MCF 10A (cell line): ENCODE measurements at regions of chr14 and their contacts with region 1.

Region 1: GRCh38 chr14:51395361-51395849 is 155.4 kb downstream of the TMX1 start:
- DNase-seq: peak; percentile 95
- H3K4me3 Mint-ChIP-seq: peak overlapping the region; percentile 48
- H3K27ac Mint-ChIP-seq: peak overlapping the region; percentile 97
- H3K4me1 Mint-ChIP-seq: peaks cover 44% of the 10 kb centered on the region
- H3K27me3 Mint-ChIP-seq: no peaks in the 10 kb centered on the region
- CTCF ChIP-seq: no peak

Region 2: DNA sequence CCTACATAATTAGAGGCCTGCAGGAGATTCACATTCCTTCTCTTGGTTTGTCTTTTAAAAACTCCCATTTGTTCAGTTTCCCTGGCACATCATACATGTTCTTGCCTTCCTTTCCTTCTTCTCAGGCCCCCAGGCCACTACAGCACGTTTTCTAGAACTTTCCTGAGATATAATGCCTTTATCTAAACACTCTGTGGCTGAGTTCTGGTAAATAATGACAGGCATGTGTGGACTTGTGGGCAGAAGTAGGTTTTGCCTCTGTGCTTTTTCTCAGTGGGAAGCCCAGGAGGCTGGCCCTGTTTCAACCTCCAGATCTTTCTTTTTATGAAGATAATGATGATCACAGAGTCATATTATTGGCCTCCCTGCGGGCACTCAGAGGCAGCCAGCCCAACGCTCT is 38.2 kb before region 1 on chr14:
- CTCF ChIA-PET with region 1: interaction called, 3 read pairs
- POLR2A ChIA-PET with region 1: interaction called, 10 read pairs
- intact Hi-C with region 1: no loop called
- DNase-seq: no peak
- H3K4me3 Mint-ChIP-seq: peak overlapping the region; percentile 24
- H3K27ac Mint-ChIP-seq: peak overlapping the region; percentile 87
- H3K4me1 Mint-ChIP-seq: peaks cover 24% of the 10 kb centered on the region
- H3K27me3 Mint-ChIP-seq: no peaks in the 10 kb centered on the region
- CTCF ChIP-seq: no peak

Region 3: DNA sequence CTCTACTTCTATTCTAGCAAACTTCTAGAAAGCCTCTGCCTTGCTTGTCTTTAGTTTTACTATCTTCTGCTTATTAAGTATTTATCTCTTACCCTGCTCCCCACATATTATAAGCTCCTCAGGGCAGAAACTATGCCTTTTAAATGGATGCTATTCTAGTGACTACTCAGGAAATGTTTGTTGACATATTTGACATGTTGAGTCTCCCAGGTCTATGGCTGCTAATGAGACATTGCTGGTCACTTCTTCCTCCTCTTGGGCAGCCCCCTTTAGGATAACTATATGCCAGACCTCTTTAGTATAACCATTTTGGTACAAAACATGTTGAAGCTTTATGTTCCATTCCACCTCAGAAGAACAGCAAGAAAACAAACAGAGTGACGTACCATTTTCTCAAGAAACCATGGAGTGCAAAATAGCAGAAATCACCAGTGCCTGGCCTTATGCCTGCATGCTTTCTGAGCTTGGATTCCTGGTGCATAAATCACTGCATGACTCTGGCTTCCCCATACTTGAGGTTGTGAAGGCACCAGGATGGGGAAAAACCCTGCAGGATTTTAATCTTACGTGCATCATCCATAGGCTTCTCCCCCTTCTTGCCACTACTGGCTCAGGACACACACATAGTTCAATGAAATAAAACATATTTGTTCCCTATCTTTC is 47.2 kb after region 1 on chr14:
- CTCF ChIA-PET with region 1: no interaction called
- POLR2A ChIA-PET with region 1: interaction called, 33 read pairs
- intact Hi-C with region 1: loop called (anchors 5 kb)
- DNase-seq: peak; percentile 85
- H3K4me3 Mint-ChIP-seq: peak overlapping the region; percentile 1
- H3K27ac Mint-ChIP-seq: peak overlapping the region; percentile 90
- H3K4me1 Mint-ChIP-seq: peaks cover 32% of the 10 kb centered on the region
- H3K27me3 Mint-ChIP-seq: no peaks in the 10 kb centered on the region
- CTCF ChIP-seq: no peak

Region 4: GRCh38 chr14:51539571-51540037 is 144.2 kb after region 1 on chr14:
- CTCF ChIA-PET with region 1: no interaction called
- POLR2A ChIA-PET with region 1: interaction called, 28 read pairs
- intact Hi-C with region 1: loop called (anchors 5 kb)
- DNase-seq: peak; percentile 81
- H3K4me3 Mint-ChIP-seq: peak overlapping the region; percentile 49
- H3K27ac Mint-ChIP-seq: peak overlapping the region; percentile 92
- H3K4me1 Mint-ChIP-seq: peaks cover 52% of the 10 kb centered on the region
- H3K27me3 Mint-ChIP-seq: no peaks in the 10 kb centered on the region
- CTCF ChIP-seq: no peak

Region 5: DNA sequence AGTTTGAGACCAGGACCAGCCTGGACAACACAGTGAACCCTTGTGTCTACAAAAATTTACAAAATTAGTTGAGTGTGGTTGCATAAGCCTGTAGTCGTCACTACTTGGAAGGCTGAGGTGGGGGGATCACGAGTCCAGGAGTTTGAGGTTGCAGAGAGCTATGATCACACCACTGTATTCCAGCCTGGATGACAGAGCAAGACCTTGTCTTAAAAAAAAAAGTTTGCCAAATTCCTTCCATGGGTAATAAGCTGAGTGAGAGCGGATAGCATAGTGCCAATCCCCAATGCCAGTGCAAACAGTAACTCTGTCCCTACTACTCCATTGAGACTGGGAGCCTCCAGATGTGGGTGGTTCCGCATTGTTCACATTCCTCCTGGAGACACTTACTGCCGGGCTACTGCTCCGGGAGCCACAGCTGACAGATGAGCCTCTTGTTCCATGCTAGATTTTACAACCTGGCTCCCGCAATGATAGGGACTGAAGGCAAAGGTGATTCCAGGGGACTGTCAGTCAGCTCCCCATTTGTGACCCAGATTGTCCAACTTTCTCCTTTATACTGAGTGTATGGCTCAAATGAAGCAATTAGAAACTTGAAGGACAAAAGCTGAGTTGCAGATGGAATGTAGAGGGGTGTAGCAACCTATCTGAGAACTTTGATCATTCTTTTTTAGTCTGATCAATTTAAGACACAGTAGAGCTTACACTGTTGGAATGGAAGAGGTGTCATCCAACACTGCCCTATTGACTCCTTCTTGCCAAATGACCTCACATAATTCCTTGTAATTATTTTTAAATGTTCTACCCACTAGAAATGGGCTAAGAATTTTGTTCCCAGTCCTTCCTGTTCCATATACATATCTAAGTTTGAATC is 242.9 kb after region 1 on chr14:
- CTCF ChIA-PET with region 1: no interaction called
- POLR2A ChIA-PET with region 1: no interaction called
- intact Hi-C with region 1: no loop called
- DNase-seq: peak; percentile 38
- H3K4me3 Mint-ChIP-seq: no peak overlapping the region
- H3K27ac Mint-ChIP-seq: peak overlapping the region; percentile 49
- H3K4me1 Mint-ChIP-seq: peaks cover 28% of the 10 kb centered on the region
- H3K27me3 Mint-ChIP-seq: no peaks in the 10 kb centered on the region
- CTCF ChIP-seq: no peak